ENCODE measurements at regions of chr7 and their contacts with region 1.

Region 1: GRCh38 chr7:115679976-115680375 is 350.6 kb downstream of the TFEC start:
- DNase-seq: no peak
- H3K4me3 ChIP-seq: no peak overlapping the region
- H3K27me3 ChIP-seq: no peaks in the 10 kb centered on the region
- CTCF ChIP-seq: peak; percentile 52

Region 2: DNA sequence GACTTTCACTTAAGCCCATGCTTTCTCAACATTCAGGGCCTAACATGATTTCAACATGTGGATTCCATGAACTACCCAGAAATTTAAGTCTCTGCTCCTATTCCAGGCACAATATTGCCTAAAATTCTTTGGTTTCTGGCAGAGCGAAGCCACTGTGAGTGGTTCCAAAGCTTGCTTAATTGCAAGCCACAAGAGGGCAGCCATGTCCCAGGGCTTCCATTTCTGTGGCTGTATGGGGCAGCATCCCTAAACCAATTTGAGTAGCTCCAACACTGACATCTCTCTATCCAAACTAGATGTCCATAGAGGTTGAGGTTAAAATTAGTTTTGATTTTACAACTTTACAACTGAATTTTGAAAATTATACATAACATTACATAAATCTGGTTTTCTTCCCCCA is 814.4 kb before region 1 on chr7:
- CTCF ChIA-PET with region 1: interaction called, 14 read pairs
- POLR2A ChIA-PET with region 1: no interaction called
- DNase-seq: no peak
- H3K4me3 ChIP-seq: no peak overlapping the region
- H3K27me3 ChIP-seq: no peaks in the 10 kb centered on the region
- CTCF ChIP-seq: peak; percentile 85

Measured in BJ (cell line).